Endothelial cell of umbilical vein (primary cell): ENCODE measurements at regions of chr2 and their contacts with region 1.

Region 1: GRCh38 chr2:126776692-126777619 is 121.0 kb downstream of the GYPC start:
- DNase-seq: peak; percentile 41
- H3K4me3 ChIP-seq: peak overlapping the region in 2 of 3 experiments; percentile 10 to 35
- H3K27ac ChIP-seq: no peak overlapping the region
- H3K4me1 ChIP-seq: peaks cover 5% of the 10 kb centered on the region
- H3K27me3 ChIP-seq: peaks cover 0 to 8% of the 10 kb centered on the region in 2 experiments
- CTCF ChIP-seq: peak; percentile 90 to 94
- POLR2A ChIP-seq: no peak

Region 2: GRCh38 chr2:126527836-126528507 is 249.0 kb before region 1 on chr2:
- CTCF ChIA-PET with region 1: interaction called, 27 read pairs
- POLR2A ChIA-PET with region 1: no interaction called
- dilution Hi-C with region 1: no loop called
- intact Hi-C with region 1: loop called (anchors 1 kb)
- DNase-seq: no peak
- H3K4me3 ChIP-seq: no peak overlapping the region
- H3K27ac ChIP-seq: no peak overlapping the region
- H3K4me1 ChIP-seq: no peaks in the 10 kb centered on the region
- H3K27me3 ChIP-seq: no peaks in the 10 kb centered on the region
- CTCF ChIP-seq: peak in 1 of 2 donors; percentile 15
- POLR2A ChIP-seq: no peak

Region 3: GRCh38 chr2:126657636-126658318 is 119.2 kb before region 1 on chr2:
- CTCF ChIA-PET with region 1: interaction called, 4 read pairs
- POLR2A ChIA-PET with region 1: no interaction called
- dilution Hi-C with region 1: no loop called
- intact Hi-C with region 1: loop called (anchors 5 kb)
- DNase-seq: peak; percentile 73
- H3K4me3 ChIP-seq: no peak overlapping the region
- H3K27ac ChIP-seq: peak overlapping the region; percentile 47
- H3K4me1 ChIP-seq: peaks cover 28% of the 10 kb centered on the region
- H3K27me3 ChIP-seq: no peaks in the 10 kb centered on the region
- CTCF ChIP-seq: no peak
- POLR2A ChIP-seq: no peak

Region 4: GRCh38 chr2:126761981-126762878 is 14.7 kb before region 1 on chr2:
- CTCF ChIA-PET with region 1: no interaction called
- POLR2A ChIA-PET with region 1: no interaction called
- dilution Hi-C with region 1: no loop called
- intact Hi-C with region 1: loop called (anchors 1 kb)
- DNase-seq: no peak
- H3K4me3 ChIP-seq: no peak overlapping the region
- H3K27ac ChIP-seq: no peak overlapping the region
- H3K4me1 ChIP-seq: no peaks in the 10 kb centered on the region
- H3K27me3 ChIP-seq: no peaks in the 10 kb centered on the region
- CTCF ChIP-seq: no peak
- POLR2A ChIP-seq: no peak

Region 5: GRCh38 chr2:126886211-126886915 is 109.4 kb after region 1 on chr2:
- CTCF ChIA-PET with region 1: no interaction called
- POLR2A ChIA-PET with region 1: no interaction called
- dilution Hi-C with region 1: no loop called
- intact Hi-C with region 1: no loop called
- DNase-seq: peak; percentile 28
- H3K4me3 ChIP-seq: no peak overlapping the region
- H3K27ac ChIP-seq: no peak overlapping the region
- H3K4me1 ChIP-seq: no peaks in the 10 kb centered on the region
- H3K27me3 ChIP-seq: no peaks in the 10 kb centered on the region
- CTCF ChIP-seq: peak; percentile 60 to 69
- POLR2A ChIP-seq: no peak